Naive thymus-derived CD4-positive, alpha-beta T cell (primary cell): ENCODE measurements at regions of chr17 and their contacts with region 1.

Region 1: GRCh38 chr17:46167826-46168569 is 25.2 kb downstream of the KANSL1 start:
- DNase-seq: no peak
- ATAC-seq: no peak
- H3K4me3 ChIP-seq: no peak overlapping the region
- H3K4me3 Mint-ChIP-seq: peak overlapping the region in 8 of 10 donors; percentile 36 to 54 (median 48)
- H3K27ac ChIP-seq: no peak overlapping the region
- H3K27ac Mint-ChIP-seq: peak overlapping the region in 8 of 9 donors; percentile 6 to 76 (median 46)
- H3K4me1 ChIP-seq: peaks cover 40 to 55% of the 10 kb centered on the region in 2 donors
- H3K4me1 Mint-ChIP-seq: peaks cover 63 to 92% (median 86%) of the 10 kb centered on the region in 7 donors
- H3K27me3 ChIP-seq: no peaks in the 10 kb centered on the region
- H3K27me3 Mint-ChIP-seq: no peaks in the 10 kb centered on the region

Region 2: GRCh38 chr17:46061435-46061834 is 106.6 kb before region 1 on chr17:
- CTCF ChIA-PET with region 1: no interaction called
- POLR2A ChIA-PET with region 1: no interaction called
- intact Hi-C with region 1: no loop called
- DNase-seq: no peak
- ATAC-seq: peak; percentile 41
- H3K4me3 ChIP-seq: no peak overlapping the region
- H3K4me3 Mint-ChIP-seq: no peak overlapping the region
- H3K27ac ChIP-seq: no peak overlapping the region
- H3K27ac Mint-ChIP-seq: peak overlapping the region in 4 of 9 donors; percentile 22 to 69 (median 44)
- H3K4me1 ChIP-seq: no peaks in the 10 kb centered on the region
- H3K4me1 Mint-ChIP-seq: peaks cover 1 to 59% (median 39%) of the 10 kb centered on the region in 7 donors
- H3K27me3 ChIP-seq: no peaks in the 10 kb centered on the region
- H3K27me3 Mint-ChIP-seq: no peaks in the 10 kb centered on the region

Region 3: DNA sequence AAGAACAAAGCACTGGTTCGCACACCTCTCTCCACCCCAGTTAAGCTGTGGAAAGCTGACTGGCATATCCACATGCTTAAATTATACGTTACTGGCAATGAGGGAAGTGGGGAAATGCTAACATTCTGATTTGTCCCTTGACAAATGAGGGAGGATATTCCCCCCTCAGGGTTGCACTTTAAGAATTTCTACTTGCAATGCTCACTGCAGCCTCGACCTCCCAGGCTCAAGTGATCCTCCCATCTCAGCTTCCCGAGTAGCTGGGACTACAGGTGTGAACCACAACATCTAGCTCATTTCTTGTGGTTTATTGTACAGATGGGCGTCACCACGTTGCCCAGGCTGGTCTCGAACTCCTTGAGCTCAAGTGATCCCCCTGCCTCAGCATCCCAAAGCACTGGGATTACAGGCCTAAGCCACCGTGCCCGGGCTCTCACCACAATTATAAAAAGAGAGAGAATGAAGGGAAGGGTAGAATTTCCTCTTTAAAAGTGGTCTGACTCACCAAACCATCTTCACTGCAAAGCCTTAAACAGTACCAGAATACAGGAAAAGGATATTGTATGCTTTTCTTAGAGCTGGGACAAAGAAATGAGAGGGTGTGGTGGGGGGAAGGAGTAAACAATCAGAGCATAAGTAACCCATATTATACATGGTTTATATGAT is 13.7 kb before region 1 on chr17:
- CTCF ChIA-PET with region 1: interaction called, 4 read pairs
- POLR2A ChIA-PET with region 1: interaction called, 5 read pairs
- intact Hi-C with region 1: loop called in 1 of 2 experiments (anchors 2 kb)
- DNase-seq: peak in 3 of 9 donors; percentile 14 to 44 (median 24)
- ATAC-seq: peak; percentile 58
- H3K4me3 ChIP-seq: peak overlapping the region; percentile 10
- H3K4me3 Mint-ChIP-seq: peak overlapping the region; percentile 57 to 82 (median 70)
- H3K27ac ChIP-seq: peak overlapping the region; percentile 27
- H3K27ac Mint-ChIP-seq: peak overlapping the region; percentile 4 to 87 (median 66)
- H3K4me1 ChIP-seq: peaks cover 87 to 89% of the 10 kb centered on the region in 2 donors
- H3K4me1 Mint-ChIP-seq: peaks cover 78 to 100% (median 90%) of the 10 kb centered on the region in 7 donors
- H3K27me3 ChIP-seq: no peaks in the 10 kb centered on the region
- H3K27me3 Mint-ChIP-seq: no peaks in the 10 kb centered on the region

Region 4: GRCh38 chr17:46184696-46185095 is 16.7 kb after region 1 on chr17:
- CTCF ChIA-PET with region 1: interaction called, 11 read pairs
- POLR2A ChIA-PET with region 1: interaction called, 7 read pairs
- intact Hi-C with region 1: loop called in 1 of 2 experiments (anchors 2 kb)
- DNase-seq: no peak
- ATAC-seq: no peak
- H3K4me3 ChIP-seq: no peak overlapping the region
- H3K4me3 Mint-ChIP-seq: peak overlapping the region in 8 of 10 donors; percentile 37 to 98 (median 72)
- H3K27ac ChIP-seq: no peak overlapping the region
- H3K27ac Mint-ChIP-seq: peak overlapping the region in 7 of 9 donors; percentile 22 to 81 (median 31)
- H3K4me1 ChIP-seq: peaks cover 74 to 89% of the 10 kb centered on the region in 2 donors
- H3K4me1 Mint-ChIP-seq: peaks cover 71 to 100% (median 93%) of the 10 kb centered on the region in 7 donors
- H3K27me3 ChIP-seq: no peaks in the 10 kb centered on the region
- H3K27me3 Mint-ChIP-seq: no peaks in the 10 kb centered on the region